CD8-positive, alpha-beta T cell (primary cell): ENCODE measurements at regions of chr2 and their contacts with region 1.

Region 1: DNA sequence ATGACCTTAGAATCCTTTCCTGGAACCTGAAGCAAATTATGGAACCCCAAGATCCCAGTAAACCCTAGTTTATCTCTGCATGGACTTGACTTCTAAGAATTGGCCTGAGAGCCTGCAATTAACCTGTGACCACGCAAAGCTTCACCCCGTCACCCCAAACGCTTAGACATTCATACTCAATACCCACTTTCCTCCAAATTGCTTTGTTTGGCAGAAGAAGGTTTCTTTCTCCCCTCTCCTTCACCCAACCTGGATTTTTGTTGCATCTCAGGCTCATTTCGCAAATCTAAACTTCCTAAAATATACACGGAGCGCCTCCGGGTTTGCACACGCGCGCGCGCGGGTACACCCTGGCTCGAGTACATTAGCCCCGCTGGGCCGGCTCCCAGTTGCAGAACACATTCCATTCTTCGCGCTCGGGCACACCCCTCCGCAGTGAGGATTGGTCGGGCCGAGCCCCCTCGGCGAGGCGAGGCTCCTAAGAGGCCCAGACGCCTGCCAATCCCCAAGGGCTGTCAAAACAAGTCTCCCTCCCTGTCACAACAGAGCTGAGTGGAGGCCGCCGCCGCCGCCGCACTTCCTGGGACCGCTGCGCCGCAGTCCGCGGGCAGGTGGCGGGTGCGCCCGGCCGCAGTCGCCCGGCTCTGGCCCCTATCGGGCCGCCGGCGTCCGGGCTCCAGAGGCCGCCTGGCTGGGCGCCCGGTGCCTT is at the start of gene PLCL1:
- DNase-seq: peak; percentile 77 to 94 (median 88)
- ATAC-seq: peak; percentile 98
- H3K4me3 ChIP-seq: peak within 1 kb of the TSS; percentile 67 to 70
- H3K4me3 Mint-ChIP-seq: peak within 1 kb of the TSS; percentile 92
- H3K27ac ChIP-seq: peak within 1 kb of the TSS in 1 of 2 experiments; percentile 53
- H3K27ac Mint-ChIP-seq: peak within 1 kb of the TSS; percentile 89
- H3K4me1 ChIP-seq: peaks cover 44% of the 10 kb centered on the region
- H3K4me1 Mint-ChIP-seq: peaks cover 44% of the 10 kb centered on the region
- H3K27me3 ChIP-seq: no peaks in the 10 kb centered on the region
- H3K27me3 Mint-ChIP-seq: no peaks in the 10 kb centered on the region
- CTCF ChIP-seq: no peak
- total RNA-seq, gene PLCL1: 8.2 to 8.3 TPM

Region 2: DNA sequence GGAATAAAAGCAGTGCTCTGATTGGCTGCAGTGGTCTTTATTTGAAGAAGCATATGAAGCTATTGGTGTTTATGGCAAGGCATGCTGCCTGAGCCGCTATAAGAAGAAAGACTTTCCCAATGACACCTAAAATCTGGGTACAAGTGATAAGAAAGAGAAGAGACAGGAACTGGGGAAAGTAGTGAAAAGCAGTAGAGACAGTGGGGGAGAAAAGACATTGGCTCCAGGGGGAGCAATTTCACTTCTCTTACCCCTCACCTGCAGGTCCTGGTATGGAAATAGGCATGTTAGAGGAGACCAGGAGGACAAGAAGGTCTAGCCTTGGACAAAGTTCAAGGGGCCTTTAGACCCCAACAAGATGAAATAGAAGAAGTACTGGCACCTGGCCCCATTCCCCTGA is 47.2 kb after region 1 on chr2:
- CTCF ChIA-PET with region 1: interaction called, 3 read pairs
- POLR2A ChIA-PET with region 1: no interaction called
- intact Hi-C with region 1: loop called in 1 of 2 experiments (anchors 2 kb)
- DNase-seq: peak in 1 of 9 experiments; percentile 33
- ATAC-seq: no peak
- H3K4me3 ChIP-seq: no peak overlapping the region
- H3K4me3 Mint-ChIP-seq: no peak overlapping the region
- H3K27ac ChIP-seq: no peak overlapping the region
- H3K27ac Mint-ChIP-seq: no peak overlapping the region
- H3K4me1 ChIP-seq: peaks cover 23% of the 10 kb centered on the region
- H3K4me1 Mint-ChIP-seq: peaks cover 54% of the 10 kb centered on the region
- H3K27me3 ChIP-seq: no peaks in the 10 kb centered on the region
- H3K27me3 Mint-ChIP-seq: no peaks in the 10 kb centered on the region
- CTCF ChIP-seq: no peak

Region 3: DNA sequence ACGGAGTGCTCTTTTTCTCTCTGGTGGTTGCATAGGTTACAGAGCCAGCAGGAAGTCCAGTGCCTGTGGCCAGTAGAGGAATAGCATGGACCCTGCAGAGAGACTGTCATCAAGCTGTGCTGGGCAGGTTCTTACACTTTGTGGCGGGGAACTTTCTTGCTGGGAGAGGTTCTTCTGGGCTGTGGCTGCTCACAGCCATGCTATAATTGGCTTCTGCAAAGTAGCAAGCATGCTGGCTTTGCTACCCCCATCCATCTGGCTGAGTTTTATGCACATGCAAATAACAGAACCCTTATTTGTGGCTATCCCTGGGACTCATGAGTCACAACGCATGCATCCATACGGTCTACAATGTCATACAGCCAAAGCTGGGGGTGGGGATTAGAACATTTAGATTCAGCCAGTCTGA is 69.1 kb after region 1 on chr2:
- CTCF ChIA-PET with region 1: no interaction called
- POLR2A ChIA-PET with region 1: no interaction called
- intact Hi-C with region 1: loop called (anchors 5 kb)
- DNase-seq: no peak
- ATAC-seq: no peak
- H3K4me3 ChIP-seq: no peak overlapping the region
- H3K4me3 Mint-ChIP-seq: no peak overlapping the region
- H3K27ac ChIP-seq: no peak overlapping the region
- H3K27ac Mint-ChIP-seq: no peak overlapping the region
- H3K4me1 ChIP-seq: peaks cover 22% of the 10 kb centered on the region
- H3K4me1 Mint-ChIP-seq: peaks cover 40% of the 10 kb centered on the region
- H3K27me3 ChIP-seq: no peaks in the 10 kb centered on the region
- H3K27me3 Mint-ChIP-seq: no peaks in the 10 kb centered on the region
- CTCF ChIP-seq: no peak

Region 4: GRCh38 chr2:197889041-197889440 is 84.8 kb after region 1 on chr2:
- CTCF ChIA-PET with region 1: no interaction called
- POLR2A ChIA-PET with region 1: interaction called, 3 read pairs
- intact Hi-C with region 1: loop called in 1 of 2 experiments (anchors 5 kb)
- DNase-seq: peak in 3 of 9 experiments; percentile 8 to 56 (median 37)
- ATAC-seq: peak; percentile 88
- H3K4me3 ChIP-seq: no peak overlapping the region
- H3K4me3 Mint-ChIP-seq: peak overlapping the region; percentile 19
- H3K27ac ChIP-seq: no peak overlapping the region
- H3K27ac Mint-ChIP-seq: peak overlapping the region; percentile 83
- H3K4me1 ChIP-seq: peaks cover 24% of the 10 kb centered on the region
- H3K4me1 Mint-ChIP-seq: peaks cover 37% of the 10 kb centered on the region
- H3K27me3 ChIP-seq: no peaks in the 10 kb centered on the region
- H3K27me3 Mint-ChIP-seq: no peaks in the 10 kb centered on the region
- CTCF ChIP-seq: no peak

Region 5: DNA sequence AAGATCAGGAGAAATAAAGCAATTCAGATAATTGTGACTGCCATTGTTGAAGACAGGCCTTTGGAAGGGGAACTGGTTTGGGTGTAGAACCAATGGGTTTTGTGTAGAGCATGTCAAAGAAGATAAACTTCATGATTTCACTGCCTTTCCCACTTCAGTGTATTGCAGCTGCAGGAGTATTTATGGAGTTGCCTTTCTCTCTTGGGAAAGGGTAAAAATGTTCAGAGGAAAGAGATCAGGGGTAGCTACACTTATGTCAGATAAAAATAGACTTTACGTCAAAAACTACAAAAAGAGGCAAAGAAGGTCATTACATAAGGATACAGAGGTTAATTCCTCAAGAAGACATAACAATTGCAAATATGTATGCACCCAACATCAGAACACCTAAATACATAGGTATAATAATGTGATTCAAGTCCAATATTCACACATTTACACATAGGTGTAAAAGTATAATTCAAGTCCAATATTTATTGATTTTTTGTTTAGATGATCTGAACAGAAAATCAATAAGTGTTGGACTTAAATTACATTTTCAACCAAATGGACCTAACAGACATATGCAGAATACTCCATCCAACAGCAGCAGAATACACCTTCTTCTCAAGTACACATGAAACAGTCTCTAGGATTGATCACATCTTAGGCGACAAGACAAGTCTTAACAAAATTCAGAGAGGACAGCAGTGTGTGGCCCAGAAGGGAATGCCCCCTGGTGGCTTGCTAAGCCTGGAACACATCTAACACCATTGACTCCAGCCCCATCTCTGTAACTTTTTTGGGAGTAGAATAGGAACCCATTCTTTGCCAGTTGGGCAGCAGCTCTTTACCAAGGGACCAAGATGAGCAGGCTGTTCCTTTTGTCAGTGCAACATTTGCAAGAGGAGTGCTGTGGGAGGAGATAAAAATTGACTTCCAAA is 249.8 kb after region 1 on chr2:
- CTCF ChIA-PET with region 1: interaction called, 8 read pairs
- POLR2A ChIA-PET with region 1: interaction called, 3 read pairs
- intact Hi-C with region 1: loop called (anchors 1 kb)
- DNase-seq: peak in 5 of 9 experiments; percentile 34 to 65 (median 50)
- ATAC-seq: no peak
- H3K4me3 ChIP-seq: no peak overlapping the region
- H3K4me3 Mint-ChIP-seq: no peak overlapping the region
- H3K27ac ChIP-seq: no peak overlapping the region
- H3K27ac Mint-ChIP-seq: no peak overlapping the region
- H3K4me1 ChIP-seq: no peaks in the 10 kb centered on the region
- H3K4me1 Mint-ChIP-seq: peaks cover 2% of the 10 kb centered on the region
- H3K27me3 ChIP-seq: no peaks in the 10 kb centered on the region
- H3K27me3 Mint-ChIP-seq: no peaks in the 10 kb centered on the region
- CTCF ChIP-seq: peak; percentile 34

Region 6: DNA sequence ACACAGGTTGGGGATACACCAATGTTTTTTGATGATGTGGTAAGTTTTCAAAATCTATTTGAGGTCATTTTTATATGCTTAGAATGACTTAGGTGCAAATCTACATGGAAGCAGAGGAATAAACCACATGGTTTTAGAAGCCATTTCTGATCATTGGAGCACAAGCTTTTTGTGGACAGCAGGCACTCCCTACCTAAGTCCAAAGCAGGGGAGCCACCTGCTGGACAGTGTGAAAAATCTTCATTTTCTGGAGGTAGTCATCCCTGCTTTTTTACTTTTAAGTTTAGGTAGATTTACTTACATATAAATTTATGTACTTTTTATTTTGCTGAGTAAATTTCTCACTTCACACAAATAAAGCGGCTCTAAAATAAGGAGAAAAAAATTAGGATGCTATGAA is 323.4 kb after region 1 on chr2:
- CTCF ChIA-PET with region 1: interaction called, 36 read pairs
- POLR2A ChIA-PET with region 1: interaction called, 4 read pairs
- intact Hi-C with region 1: loop called in 1 of 2 experiments (anchors 1 kb)
- DNase-seq: peak; percentile 2 to 69 (median 32)
- ATAC-seq: peak; percentile 58
- H3K4me3 ChIP-seq: no peak overlapping the region
- H3K4me3 Mint-ChIP-seq: no peak overlapping the region
- H3K27ac ChIP-seq: no peak overlapping the region
- H3K27ac Mint-ChIP-seq: no peak overlapping the region
- H3K4me1 ChIP-seq: no peaks in the 10 kb centered on the region
- H3K4me1 Mint-ChIP-seq: no peaks in the 10 kb centered on the region
- H3K27me3 ChIP-seq: no peaks in the 10 kb centered on the region
- H3K27me3 Mint-ChIP-seq: no peaks in the 10 kb centered on the region
- CTCF ChIP-seq: peak; percentile 48